ENCODE measurements at regions of chr9 and their contacts with region 1.

Region 1: GRCh38 chr9:120928483-120929228 is 2.1 kb upstream of the TRAF1 start:
- DNase-seq: peak; percentile 86
- H3K4me3 Mint-ChIP-seq: peak overlapping the region; percentile 80
- H3K27ac Mint-ChIP-seq: peak overlapping the region; percentile 99
- H3K4me1 Mint-ChIP-seq: peaks cover 64% of the 10 kb centered on the region
- H3K27me3 Mint-ChIP-seq: no peaks in the 10 kb centered on the region

Region 2: DNA sequence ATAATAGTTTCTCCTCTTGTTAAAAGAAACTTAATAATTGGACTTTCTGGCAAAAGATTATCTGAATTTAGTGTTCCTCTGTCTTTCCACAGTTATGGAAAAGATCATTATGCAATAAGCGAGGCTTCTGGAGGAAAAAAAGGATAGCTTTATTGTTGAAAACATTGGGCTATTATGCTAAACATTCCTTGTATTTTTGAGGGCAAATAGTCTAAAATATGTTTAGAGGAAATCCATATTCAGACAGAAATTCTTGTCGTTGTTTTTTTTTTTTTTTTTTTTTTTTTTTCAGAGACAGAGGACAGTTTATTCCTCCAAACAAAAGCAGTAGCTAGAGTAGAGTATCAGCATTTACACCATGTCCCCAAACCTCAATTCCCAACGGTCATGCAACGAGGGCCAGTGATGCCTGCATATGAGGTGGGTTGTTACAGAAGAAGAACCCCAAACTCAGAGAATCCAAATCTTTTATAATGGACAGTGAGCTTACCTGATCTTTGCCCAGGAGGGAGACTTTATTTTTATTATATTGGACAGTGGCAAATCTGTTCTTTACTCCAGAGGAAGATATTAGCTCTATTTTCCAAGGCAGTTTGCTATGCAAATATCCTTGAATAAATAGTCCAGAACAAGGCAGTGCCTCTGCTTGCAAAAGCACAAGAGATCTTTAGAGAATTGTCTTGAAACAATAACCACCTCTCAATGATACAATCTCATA is 300.3 kb before region 1 on chr9:
- CTCF ChIA-PET with region 1: no interaction called
- POLR2A ChIA-PET with region 1: no interaction called
- intact Hi-C with region 1: no loop called
- DNase-seq: no peak
- H3K4me3 Mint-ChIP-seq: no peak overlapping the region
- H3K27ac Mint-ChIP-seq: no peak overlapping the region
- H3K4me1 Mint-ChIP-seq: peaks cover 8% of the 10 kb centered on the region
- H3K27me3 Mint-ChIP-seq: no peaks in the 10 kb centered on the region

Region 3: GRCh38 chr9:120792898-120793765 is 135.5 kb before region 1 on chr9 and contains the start of gene FBXW2:
- CTCF ChIA-PET with region 1: interaction called, 4 read pairs
- POLR2A ChIA-PET with region 1: interaction called, 15 read pairs
- intact Hi-C with region 1: no loop called
- DNase-seq: peak; percentile 95
- H3K4me3 Mint-ChIP-seq: peak within 1 kb of the TSS; percentile 80
- H3K27ac Mint-ChIP-seq: peak within 1 kb of the TSS; percentile 93
- H3K4me1 Mint-ChIP-seq: peaks cover 42% of the 10 kb centered on the region
- H3K27me3 Mint-ChIP-seq: no peaks in the 10 kb centered on the region
- total RNA-seq, gene FBXW2: 70.2 to 72.5 TPM

Region 4: DNA sequence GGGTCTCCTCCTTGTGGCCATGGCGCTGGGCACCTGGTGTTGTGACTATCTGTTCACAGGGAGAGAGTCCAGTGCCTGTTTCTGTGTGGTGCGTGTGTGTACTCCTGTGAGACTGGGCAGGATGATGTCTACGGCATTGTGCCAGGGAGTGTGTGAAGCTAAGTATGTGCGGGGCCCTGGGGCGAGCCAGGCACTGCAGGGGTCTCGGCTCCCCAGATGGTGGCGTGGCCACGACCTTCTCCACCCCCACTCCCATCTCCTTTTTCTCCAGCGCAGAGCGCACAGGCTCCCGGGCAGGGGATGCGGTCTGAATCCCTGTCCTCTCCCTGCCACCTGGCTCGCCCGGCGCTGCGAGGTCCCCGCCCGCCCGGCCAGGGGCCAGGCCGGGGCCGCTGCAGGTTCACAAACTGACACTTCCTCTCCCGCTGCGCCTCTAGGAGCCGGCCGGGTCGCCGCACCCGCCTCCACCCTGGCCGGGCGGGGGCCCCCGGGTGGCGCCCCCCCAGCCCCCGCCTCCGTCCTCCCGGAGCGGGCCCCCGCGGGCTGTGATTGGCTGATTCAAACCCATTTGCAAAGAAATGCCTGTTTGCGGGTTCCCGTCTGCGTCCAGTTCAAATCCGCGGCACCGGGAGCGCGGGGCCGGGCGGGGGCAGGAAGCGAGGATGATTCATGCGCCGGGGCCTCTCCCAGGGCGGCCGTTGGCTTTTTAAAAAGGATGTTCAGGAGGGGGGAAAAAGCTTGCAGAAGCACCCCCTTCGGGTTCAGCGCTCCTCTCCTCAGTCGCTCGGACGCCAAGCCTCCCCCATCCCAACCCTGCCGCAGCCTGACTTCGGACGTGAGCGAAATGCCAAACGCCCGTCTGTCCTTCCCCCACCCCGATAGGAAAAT is 52.5 kb before region 1 on chr9:
- CTCF ChIA-PET with region 1: interaction called, 3 read pairs
- POLR2A ChIA-PET with region 1: interaction called, 48 read pairs
- intact Hi-C with region 1: loop called (anchors 1 kb)
- DNase-seq: peak; percentile 96
- H3K4me3 Mint-ChIP-seq: peak overlapping the region; percentile 92
- H3K27ac Mint-ChIP-seq: peak overlapping the region; percentile 98
- H3K4me1 Mint-ChIP-seq: peaks cover 79% of the 10 kb centered on the region
- H3K27me3 Mint-ChIP-seq: no peaks in the 10 kb centered on the region

Region 5: DNA sequence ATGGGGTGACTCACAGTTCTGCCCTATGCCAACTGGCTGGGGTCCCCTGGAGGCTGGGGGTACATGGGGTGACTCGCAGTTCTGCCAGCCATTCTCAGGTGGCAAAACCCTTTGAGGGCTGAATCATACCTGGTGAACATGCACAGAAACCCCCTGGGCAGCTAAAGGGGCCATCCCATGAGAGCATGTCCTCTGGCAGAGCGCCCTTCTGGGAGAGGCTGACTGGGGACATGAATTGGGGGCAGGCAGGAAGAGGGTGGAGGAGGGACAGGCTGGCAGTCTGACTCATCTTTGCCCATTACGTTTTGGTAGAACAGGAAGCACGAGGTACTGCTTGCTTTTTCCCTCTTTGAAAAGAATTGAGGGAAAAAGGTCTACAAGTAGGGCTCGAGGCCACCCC is 18.8 kb before region 1 on chr9:
- CTCF ChIA-PET with region 1: no interaction called
- POLR2A ChIA-PET with region 1: interaction called, 237 read pairs
- intact Hi-C with region 1: loop called (anchors 1 kb)
- DNase-seq: peak; percentile 78
- H3K4me3 Mint-ChIP-seq: peak overlapping the region; percentile 32
- H3K27ac Mint-ChIP-seq: peak overlapping the region; percentile 94
- H3K4me1 Mint-ChIP-seq: peaks cover 91% of the 10 kb centered on the region
- H3K27me3 Mint-ChIP-seq: no peaks in the 10 kb centered on the region

Region 6: DNA sequence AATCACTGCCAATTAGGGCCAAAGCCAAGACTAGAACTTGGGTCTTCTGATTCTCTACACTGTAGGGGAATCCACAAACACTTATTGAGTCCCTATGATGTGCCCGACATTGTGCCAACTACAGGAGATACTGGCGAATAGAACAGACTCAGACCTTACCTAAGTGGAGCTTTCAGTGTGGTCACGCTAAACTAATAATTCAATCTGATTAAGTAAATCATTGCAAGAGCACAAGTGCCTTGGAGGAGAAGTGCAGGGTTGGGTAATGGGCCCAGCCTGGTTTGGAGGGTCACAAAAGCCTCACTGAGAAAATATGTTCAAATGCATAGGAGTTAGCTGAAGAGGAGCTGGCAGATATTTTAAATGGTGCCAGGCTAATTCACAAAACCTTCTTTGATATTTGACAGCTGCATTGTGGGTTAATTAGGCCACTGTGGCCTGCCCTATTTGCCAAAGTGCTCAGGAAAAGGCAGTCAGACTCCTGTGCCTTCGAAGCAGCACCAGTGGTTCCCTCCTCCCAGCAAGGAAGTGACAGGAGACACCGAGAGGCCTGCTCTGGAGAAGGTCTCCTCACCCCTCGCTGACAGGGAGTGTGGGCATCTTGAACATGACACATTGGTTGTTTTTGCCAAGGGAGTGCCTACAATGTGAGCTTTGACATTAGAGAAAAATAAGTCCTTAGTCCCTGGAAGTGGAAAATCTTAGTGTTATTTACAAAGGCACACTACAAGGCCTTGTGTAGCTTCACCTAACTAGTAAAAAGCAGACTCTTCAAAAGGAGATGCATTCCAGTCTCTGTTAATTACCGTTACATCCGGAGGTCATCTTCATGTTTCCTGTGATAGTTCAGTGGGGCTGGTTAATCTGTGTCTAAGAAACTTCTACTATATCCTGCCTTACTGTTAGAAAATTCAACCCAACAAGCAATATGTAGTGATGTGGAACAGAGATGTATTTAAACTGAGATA is 22.0 kb after region 1 on chr9:
- CTCF ChIA-PET with region 1: no interaction called
- POLR2A ChIA-PET with region 1: no interaction called
- intact Hi-C with region 1: no loop called
- DNase-seq: no peak
- H3K4me3 Mint-ChIP-seq: no peak overlapping the region
- H3K27ac Mint-ChIP-seq: no peak overlapping the region
- H3K4me1 Mint-ChIP-seq: no peaks in the 10 kb centered on the region
- H3K27me3 Mint-ChIP-seq: no peaks in the 10 kb centered on the region

Region 7: DNA sequence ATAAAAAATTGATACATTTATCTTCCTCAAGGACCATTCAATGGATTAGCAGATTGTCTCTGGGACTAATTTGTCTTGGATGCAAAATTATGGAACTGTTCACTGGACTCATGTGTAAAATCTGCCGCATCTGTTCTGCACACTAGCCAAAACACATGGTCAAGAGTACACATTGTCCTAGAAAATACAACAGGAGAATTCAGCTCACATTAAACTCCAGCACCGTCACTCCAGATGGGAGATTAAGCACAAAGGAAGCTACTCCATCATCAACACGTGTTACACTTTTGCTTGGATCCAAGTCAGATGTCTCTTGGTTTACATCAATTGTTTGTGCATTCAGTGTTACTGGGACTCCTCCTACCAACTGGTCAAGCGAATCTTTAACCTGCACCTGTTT is 92.6 kb after region 1 on chr9:
- CTCF ChIA-PET with region 1: no interaction called
- POLR2A ChIA-PET with region 1: no interaction called
- intact Hi-C with region 1: no loop called
- DNase-seq: no peak
- H3K4me3 Mint-ChIP-seq: no peak overlapping the region
- H3K27ac Mint-ChIP-seq: no peak overlapping the region
- H3K4me1 Mint-ChIP-seq: no peaks in the 10 kb centered on the region
- H3K27me3 Mint-ChIP-seq: no peaks in the 10 kb centered on the region

Region 8: DNA sequence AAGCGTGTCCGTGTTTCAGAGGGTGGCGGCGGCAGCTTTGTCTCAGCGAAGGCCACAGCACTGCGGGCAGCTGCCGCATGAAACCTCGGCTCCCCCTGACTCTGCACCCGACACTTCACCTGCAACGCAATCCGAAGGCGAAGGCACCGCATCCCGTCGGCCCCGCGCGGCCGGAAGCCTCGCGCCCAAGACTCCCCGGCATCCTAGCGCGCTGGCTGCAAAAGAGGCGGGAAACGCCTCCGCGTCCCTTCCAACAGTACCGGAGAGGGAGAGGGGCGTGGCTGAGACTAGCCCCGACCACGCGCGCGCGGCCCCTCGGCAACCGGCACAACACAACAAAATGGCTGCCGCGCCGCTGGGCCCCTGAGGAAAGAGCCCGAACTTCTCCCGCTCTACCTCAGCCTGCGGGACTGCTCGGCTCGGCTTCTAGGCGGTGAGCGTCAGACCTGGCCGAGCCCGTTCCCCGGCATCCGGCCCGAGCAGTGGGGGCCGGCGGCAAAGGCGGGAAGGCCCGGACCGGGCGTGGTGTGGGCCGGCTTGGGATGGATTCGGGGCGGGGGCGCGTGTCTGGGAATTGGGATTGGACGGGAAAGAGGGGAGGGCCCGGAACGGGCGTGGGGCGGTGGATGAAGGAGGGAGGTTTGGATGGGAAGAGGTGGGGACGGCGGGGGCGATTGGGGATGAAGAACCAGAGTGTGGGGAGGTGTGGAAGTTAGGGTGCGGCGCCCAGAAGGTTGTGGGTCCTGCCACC is 146.2 kb after region 1 on chr9 and contains the start of gene CNTRL:
- CTCF ChIA-PET with region 1: no interaction called
- POLR2A ChIA-PET with region 1: interaction called, 5 read pairs
- intact Hi-C with region 1: loop called (anchors 2 kb)
- DNase-seq: peak; percentile 97
- H3K4me3 Mint-ChIP-seq: peak within 1 kb of the TSS; percentile 100
- H3K27ac Mint-ChIP-seq: peak within 1 kb of the TSS; percentile 85
- H3K4me1 Mint-ChIP-seq: peaks cover 46% of the 10 kb centered on the region
- H3K27me3 Mint-ChIP-seq: no peaks in the 10 kb centered on the region
- total RNA-seq, gene CNTRL: 60.0 to 65.1 TPM

Region 9: GRCh38 chr9:121201738-121202533 is 273.3 kb after region 1 on chr9 and contains the start of gene RAB14:
- CTCF ChIA-PET with region 1: no interaction called
- POLR2A ChIA-PET with region 1: interaction called, 3 read pairs
- intact Hi-C with region 1: loop called (anchors 5 kb)
- DNase-seq: peak; percentile 100
- H3K4me3 Mint-ChIP-seq: peak within 1 kb of the TSS; percentile 90
- H3K27ac Mint-ChIP-seq: peak within 1 kb of the TSS; percentile 95
- H3K4me1 Mint-ChIP-seq: peaks cover 39% of the 10 kb centered on the region
- H3K27me3 Mint-ChIP-seq: no peaks in the 10 kb centered on the region
- total RNA-seq, gene RAB14: 58.2 to 58.5 TPM